IMR-90 (cell line): ENCODE measurements at regions of chr15 and their contacts with region 1.

Region 1: GRCh38 chr15:49962044-49962602 is 156.9 kb downstream of the ATP8B4 start:
- DNase-seq: no peak
- ATAC-seq: no peak; the same call in 1 of the 2 replicates
- H3K4me3 ChIP-seq: no peak overlapping the region
- H3K27ac ChIP-seq: no peak overlapping the region
- H3K4me1 ChIP-seq: no peaks in the 10 kb centered on the region
- H3K27me3 ChIP-seq: no peaks in the 10 kb centered on the region
- CTCF ChIP-seq: no peak
- POLR2A ChIP-seq: no peak
- RAD21 ChIP-seq: no peak

Region 2: DNA sequence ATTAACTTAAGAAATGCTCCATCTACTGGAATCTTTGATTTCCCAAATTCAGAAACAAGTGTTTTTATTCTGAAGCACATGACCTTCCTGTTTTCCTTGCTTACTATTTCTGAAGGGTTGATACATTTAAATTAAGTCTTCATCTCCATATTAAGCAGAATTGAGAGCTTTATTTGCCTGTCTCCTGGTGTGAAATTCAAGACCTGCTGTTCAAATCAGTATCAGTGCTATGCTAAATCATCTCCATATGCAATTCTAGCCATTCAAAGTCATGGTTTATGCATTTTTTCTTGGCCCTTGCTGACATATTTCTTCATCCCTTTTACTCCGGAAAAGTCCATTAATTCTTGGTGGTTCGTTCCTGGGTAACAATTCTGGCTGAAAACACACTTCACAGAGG is 38.5 kb before region 1 on chr15:
- CTCF ChIA-PET with region 1: no interaction called
- POLR2A ChIA-PET with region 1: no interaction called
- dilution Hi-C with region 1: no loop called
- in situ Hi-C with region 1: no loop called
- intact Hi-C with region 1: loop called (anchors 5 kb)
- DNase-seq: no peak
- ATAC-seq: no peak
- H3K4me3 ChIP-seq: no peak overlapping the region
- H3K27ac ChIP-seq: no peak overlapping the region
- H3K4me1 ChIP-seq: peaks cover 5% of the 10 kb centered on the region
- H3K27me3 ChIP-seq: no peaks in the 10 kb centered on the region
- CTCF ChIP-seq: no peak
- POLR2A ChIP-seq: no peak
- RAD21 ChIP-seq: no peak